Caco-2 (cell line): ENCODE measurements at regions of chr13 and their contacts with region 1.

Region 1: DNA sequence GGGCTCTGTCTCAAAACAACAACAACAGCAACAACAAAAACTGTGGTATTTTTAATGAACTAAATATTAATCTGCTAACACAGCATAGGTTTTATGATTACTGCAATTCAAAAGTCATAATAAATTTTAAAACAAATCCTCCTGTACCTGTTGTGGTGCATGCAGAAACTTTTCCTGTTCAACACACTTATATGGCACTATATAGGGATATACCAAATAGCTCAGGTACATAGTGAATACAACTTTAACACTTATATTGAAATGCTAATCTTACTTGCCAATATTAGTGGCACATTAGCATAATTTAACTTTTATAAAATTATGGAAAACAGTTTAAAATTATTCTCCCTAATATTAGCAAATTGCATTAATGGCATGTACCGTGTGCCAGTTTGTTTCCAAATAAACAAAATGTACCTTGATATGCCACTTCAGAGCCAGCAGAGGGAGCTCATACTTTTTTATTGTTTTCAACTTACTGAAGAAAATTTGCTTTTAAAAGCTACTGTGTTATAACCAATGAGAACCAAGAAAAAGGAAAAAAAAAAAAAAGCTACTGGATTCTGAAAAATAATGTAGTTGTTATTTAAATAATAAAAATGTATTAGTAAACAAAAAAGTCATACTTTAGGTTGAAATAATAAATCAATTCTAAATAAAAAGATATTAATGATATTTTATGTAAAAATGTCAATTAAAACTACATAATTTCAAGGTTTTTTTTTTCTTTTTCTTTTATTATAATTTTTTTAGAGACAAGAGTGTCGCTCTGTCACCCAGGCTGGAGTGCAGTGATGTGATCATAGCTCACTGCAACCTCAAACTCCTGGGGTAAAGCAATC is 18.0 kb upstream of the RBM26 start:
- DNase-seq: no peak
- H3K4me3 ChIP-seq: no peak overlapping the region
- H3K4me3 Mint-ChIP-seq: no peak overlapping the region
- H3K27ac Mint-ChIP-seq: no peak overlapping the region
- H3K4me1 ChIP-seq: no peaks in the 10 kb centered on the region
- H3K4me1 Mint-ChIP-seq: no peaks in the 10 kb centered on the region
- H3K27me3 ChIP-seq: no peaks in the 10 kb centered on the region
- H3K27me3 Mint-ChIP-seq: no peaks in the 10 kb centered on the region
- CTCF ChIP-seq: peak; percentile 64 to 75

Region 2: GRCh38 chr13:79442221-79442620 is 18.2 kb after region 1 on chr13:
- CTCF ChIA-PET with region 1: interaction called, 13 read pairs
- POLR2A ChIA-PET with region 1: interaction called, 3 read pairs
- intact Hi-C with region 1: no loop called
- DNase-seq: no peak
- H3K4me3 ChIP-seq: no peak overlapping the region
- H3K4me3 Mint-ChIP-seq: no peak overlapping the region
- H3K27ac Mint-ChIP-seq: peak overlapping the region; percentile 68
- H3K4me1 ChIP-seq: peaks cover 12% of the 10 kb centered on the region
- H3K4me1 Mint-ChIP-seq: peaks cover 8% of the 10 kb centered on the region
- H3K27me3 ChIP-seq: no peaks in the 10 kb centered on the region
- H3K27me3 Mint-ChIP-seq: no peaks in the 10 kb centered on the region
- CTCF ChIP-seq: no peak

Region 3: GRCh38 chr13:79496188-79496587 is 72.2 kb after region 1 on chr13:
- CTCF ChIA-PET with region 1: no interaction called
- POLR2A ChIA-PET with region 1: no interaction called
- intact Hi-C with region 1: no loop called
- DNase-seq: no peak
- H3K4me3 ChIP-seq: no peak overlapping the region
- H3K4me3 Mint-ChIP-seq: no peak overlapping the region
- H3K27ac Mint-ChIP-seq: no peak overlapping the region
- H3K4me1 ChIP-seq: peaks cover 7% of the 10 kb centered on the region
- H3K4me1 Mint-ChIP-seq: peaks cover 13% of the 10 kb centered on the region
- H3K27me3 ChIP-seq: no peaks in the 10 kb centered on the region
- H3K27me3 Mint-ChIP-seq: no peaks in the 10 kb centered on the region
- CTCF ChIP-seq: no peak

Region 4: GRCh38 chr13:79541426-79542049 is 117.5 kb after region 1 on chr13:
- CTCF ChIA-PET with region 1: interaction called, 62 read pairs
- POLR2A ChIA-PET with region 1: interaction called, 3 read pairs
- intact Hi-C with region 1: loop called (anchors 1 kb)
- DNase-seq: peak in 1 of 2 experiments; percentile 63
- H3K4me3 ChIP-seq: no peak overlapping the region
- H3K4me3 Mint-ChIP-seq: no peak overlapping the region
- H3K27ac Mint-ChIP-seq: no peak overlapping the region
- H3K4me1 ChIP-seq: no peaks in the 10 kb centered on the region
- H3K4me1 Mint-ChIP-seq: no peaks in the 10 kb centered on the region
- H3K27me3 ChIP-seq: no peaks in the 10 kb centered on the region
- H3K27me3 Mint-ChIP-seq: no peaks in the 10 kb centered on the region
- CTCF ChIP-seq: peak; percentile 73 to 84